ENCODE measurements at regions of chrX and their contacts with region 1.

Region 1: GRCh38 chrX:96979766-96980165 is 96.1 kb downstream of the RPA4 start:
- DNase-seq: no peak
- H3K4me3 ChIP-seq: no peak overlapping the region
- H3K27ac ChIP-seq: no peak overlapping the region
- H3K4me1 ChIP-seq: peaks cover 16% of the 10 kb centered on the region
- H3K27me3 ChIP-seq: no peaks in the 10 kb centered on the region
- CTCF ChIP-seq: no peak

Region 2: GRCh38 chrX:96989830-96990571 is 10.2 kb after region 1 on chrX:
- intact Hi-C with region 1: loop called (anchors 2 kb)
- DNase-seq: no peak
- H3K4me3 ChIP-seq: no peak overlapping the region
- H3K27ac ChIP-seq: no peak overlapping the region
- H3K4me1 ChIP-seq: no peaks in the 10 kb centered on the region
- H3K27me3 ChIP-seq: no peaks in the 10 kb centered on the region
- CTCF ChIP-seq: no peak

Measured in left ventricle myocardium inferior (tissue), 1 donor.